Heart left ventricle (tissue), 16 donors: ENCODE measurements at regions of chr4 and their contacts with region 1.

Region 1: GRCh38 chr4:52250154-52250553 is 199.1 kb downstream of the SPATA18 start:
- DNase-seq: peak in 4 of 5 donors; percentile 67 to 72 (median 68)
- ATAC-seq: peak; percentile 87 to 97 (median 90)
- H3K4me3 ChIP-seq: no peak overlapping the region
- H3K27ac ChIP-seq: peak overlapping the region in 1 of 12 donors; percentile 35
- H3K4me1 ChIP-seq: peaks cover 0 to 42% (median 12%) of the 10 kb centered on the region in 12 donors
- H3K27me3 ChIP-seq: no peaks in the 10 kb centered on the region
- CTCF ChIP-seq: no peak
- POLR2A ChIP-seq: no peak

Region 2: DNA sequence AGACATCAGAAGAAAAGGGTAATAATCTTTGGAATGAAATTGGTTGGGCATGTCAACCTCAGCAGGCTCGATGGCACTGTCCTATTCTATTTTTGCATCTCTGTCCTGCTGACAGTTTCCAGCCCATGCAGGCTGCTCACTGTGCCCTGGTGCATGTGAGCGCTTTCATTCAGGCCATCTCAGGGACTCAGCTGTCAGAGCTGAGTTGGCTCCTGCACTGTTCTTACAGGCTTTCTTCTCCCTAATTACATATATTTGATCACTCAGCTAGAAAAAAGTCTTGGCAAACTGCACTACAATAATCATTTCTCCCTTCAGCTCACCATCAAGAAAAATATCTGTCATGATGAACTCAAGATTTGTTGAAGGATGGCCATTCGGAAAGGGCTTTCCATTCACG is 696.7 kb after region 1 on chr4:
- intact Hi-C with region 1: no loop called
- DNase-seq: peak in 4 of 5 donors; percentile 36 to 69 (median 53)
- ATAC-seq: peak; percentile 95 to 98 (median 96)
- H3K4me3 ChIP-seq: no peak overlapping the region
- H3K27ac ChIP-seq: peak overlapping the region; percentile 3 to 86 (median 70)
- H3K4me1 ChIP-seq: peaks cover 0 to 44% (median 9%) of the 10 kb centered on the region in 12 donors
- H3K27me3 ChIP-seq: no peaks in the 10 kb centered on the region
- CTCF ChIP-seq: no peak
- POLR2A ChIP-seq: no peak

Region 3: DNA sequence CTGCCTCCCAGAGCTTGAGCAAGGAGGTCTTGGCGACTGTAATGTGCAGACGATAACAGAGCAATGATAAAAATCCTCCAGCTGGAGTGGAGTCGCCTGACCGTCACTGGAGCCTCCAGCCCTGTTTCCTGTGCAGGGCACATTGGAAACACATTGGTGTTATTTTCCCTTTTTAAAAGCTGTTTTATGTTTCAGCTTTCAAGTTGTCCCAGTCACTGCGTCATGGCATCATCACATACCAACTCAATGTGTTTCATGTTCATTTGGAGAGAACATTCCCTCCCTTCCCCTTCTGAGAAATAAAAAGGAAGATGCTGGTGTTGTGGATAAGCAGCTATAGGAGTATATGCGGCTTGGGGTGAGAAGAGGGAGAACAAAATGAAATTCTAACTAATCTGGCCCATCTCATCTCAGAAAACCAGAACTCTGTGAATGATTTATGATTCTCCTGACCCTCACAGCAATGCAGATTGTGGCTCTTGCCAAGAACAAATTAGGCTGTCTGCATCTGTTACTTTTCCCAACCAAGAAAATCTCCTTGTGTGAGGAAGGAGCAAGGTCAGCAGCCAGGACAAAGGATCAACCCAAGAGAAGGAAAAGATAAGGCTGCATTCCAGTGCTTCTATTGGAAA is 746.2 kb after region 1 on chr4:
- intact Hi-C with region 1: loop called in 1 of 10 experiments (anchors 10 kb)
- DNase-seq: peak in 2 of 5 donors; percentile 48 to 70
- ATAC-seq: peak; percentile 70 to 77 (median 72)
- H3K4me3 ChIP-seq: no peak overlapping the region
- H3K27ac ChIP-seq: peak overlapping the region in 11 of 12 donors; percentile 19 to 89 (median 61)
- H3K4me1 ChIP-seq: peaks cover 0 to 48% (median 36%) of the 10 kb centered on the region in 12 donors
- H3K27me3 ChIP-seq: no peaks in the 10 kb centered on the region
- CTCF ChIP-seq: no peak
- POLR2A ChIP-seq: no peak